ENCODE measurements at regions of chr6 and their contacts with region 1.

Region 1: GRCh38 chr6:3023663-3024483 is 24.2 kb downstream of the NQO2 start:
- DNase-seq: peak; percentile 76 to 91
- H3K4me3 ChIP-seq: peak overlapping the region; percentile 89
- H3K27ac ChIP-seq: peak overlapping the region; percentile 94
- H3K4me1 ChIP-seq: peaks cover 16% of the 10 kb centered on the region
- H3K27me3 ChIP-seq: no peaks in the 10 kb centered on the region
- CTCF ChIP-seq: no peak

Region 2: GRCh38 chr6:3052481-3053230 is 28.8 kb after region 1 on chr6:
- CTCF ChIA-PET with region 1: no interaction called
- POLR2A ChIA-PET with region 1: no interaction called
- intact Hi-C with region 1: loop called (anchors 1 kb)
- DNase-seq: no peak
- H3K4me3 ChIP-seq: no peak overlapping the region
- H3K27ac ChIP-seq: no peak overlapping the region
- H3K4me1 ChIP-seq: no peaks in the 10 kb centered on the region
- H3K27me3 ChIP-seq: no peaks in the 10 kb centered on the region
- CTCF ChIP-seq: no peak

Region 3: GRCh38 chr6:3061501-3061941 is 37.6 kb after region 1 on chr6:
- CTCF ChIA-PET with region 1: no interaction called
- POLR2A ChIA-PET with region 1: no interaction called
- intact Hi-C with region 1: loop called (anchors 2 kb)
- DNase-seq: peak; percentile 68 to 92
- H3K4me3 ChIP-seq: no peak overlapping the region; the same call in 1 of the 2 replicates
- H3K27ac ChIP-seq: peak overlapping the region; percentile 42; the same call in 1 of the 2 replicates
- H3K4me1 ChIP-seq: peaks cover 13% of the 10 kb centered on the region
- H3K27me3 ChIP-seq: no peaks in the 10 kb centered on the region
- CTCF ChIP-seq: no peak